GM10248 (cell line): ENCODE measurements at regions of chr10 and their contacts with region 1.

Region 1: DNA sequence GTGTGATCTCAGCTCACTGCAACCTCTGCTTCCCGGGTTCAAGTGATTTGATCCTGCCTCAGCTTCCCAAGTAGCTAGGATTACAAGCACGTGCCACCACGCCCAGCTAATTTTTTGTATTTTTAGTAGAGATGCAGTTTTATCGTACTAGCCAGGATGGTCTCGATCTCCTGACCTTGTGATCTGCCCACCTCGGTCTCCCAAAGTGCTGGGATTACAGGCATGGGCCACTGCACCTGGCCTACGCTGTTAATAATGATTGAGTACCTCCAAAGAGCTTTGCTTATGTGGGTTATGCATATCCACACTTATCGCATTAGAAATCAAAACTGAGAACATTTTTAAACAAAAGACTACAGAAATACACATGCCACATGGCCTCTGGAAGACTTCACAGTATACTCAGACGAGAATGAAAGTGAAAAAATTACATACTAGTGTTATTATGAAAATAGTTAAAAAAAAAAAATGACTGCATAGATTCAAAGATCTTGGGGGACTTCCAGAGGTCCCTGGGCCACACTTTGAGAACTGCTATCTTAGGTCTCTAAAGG is 25.4 kb downstream of the RPP38 start:
- DNase-seq: peak; percentile 77
- CTCF ChIP-seq: no peak

Region 2: GRCh38 chr10:14736600-14737081 is 385.9 kb before region 1 on chr10:
- CTCF ChIA-PET with region 1: no interaction called
- POLR2A ChIA-PET with region 1: no interaction called
- DNase-seq: no peak
- CTCF ChIP-seq: no peak

Region 3: GRCh38 chr10:15106352-15107013 is 16.1 kb before region 1 on chr10:
- CTCF ChIA-PET with region 1: interaction called, 27 read pairs
- POLR2A ChIA-PET with region 1: no interaction called
- DNase-seq: peak; percentile 66
- CTCF ChIP-seq: peak; percentile 68

Region 4: DNA sequence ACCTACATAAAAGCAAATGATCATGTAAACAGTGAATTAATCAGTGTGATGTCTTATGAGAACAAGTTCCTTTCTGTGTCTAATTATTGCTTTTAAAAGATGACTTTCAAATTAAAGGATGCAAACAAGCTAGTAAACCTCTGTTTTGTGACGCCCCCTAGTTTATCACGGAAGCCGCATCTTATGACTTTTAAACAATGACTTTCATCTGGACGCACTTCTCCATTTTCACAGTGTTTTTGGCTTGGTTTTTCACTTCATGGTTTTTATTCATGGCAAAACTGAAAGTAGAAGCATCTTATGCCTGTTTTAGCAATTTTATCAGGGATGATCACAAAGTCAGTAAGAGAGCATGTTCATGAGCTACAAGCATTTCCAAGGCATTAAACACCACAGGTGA is 562.2 kb after region 1 on chr10:
- CTCF ChIA-PET with region 1: no interaction called
- POLR2A ChIA-PET with region 1: no interaction called
- DNase-seq: peak; percentile 18
- CTCF ChIP-seq: no peak